Activated CD4-positive, alpha-beta T cell treated with anti-CD3 and anti-CD28 coated beads for 36 hours (primary cell): ENCODE measurements at regions of chr4 and their contacts with region 1.

Region 1: GRCh38 chr4:15956179-15956850 is 6.7 kb downstream of the FGFBP2 start:
- DNase-seq: peak; percentile 92
- ATAC-seq: peak; percentile 93
- H3K4me3 Mint-ChIP-seq: no peak overlapping the region
- H3K27ac Mint-ChIP-seq: no peak overlapping the region
- H3K4me1 Mint-ChIP-seq: peaks cover 5% of the 10 kb centered on the region
- H3K27me3 Mint-ChIP-seq: no peaks in the 10 kb centered on the region

Region 2: GRCh38 chr4:15231265-15232091 is 724.8 kb before region 1 on chr4:
- CTCF ChIA-PET with region 1: no interaction called
- POLR2A ChIA-PET with region 1: no interaction called
- intact Hi-C with region 1: loop called in 1 of 2 experiments (anchors 1 kb)
- DNase-seq: peak; percentile 85
- ATAC-seq: peak; percentile 65
- H3K4me3 Mint-ChIP-seq: no peak overlapping the region
- H3K27ac Mint-ChIP-seq: no peak overlapping the region
- H3K4me1 Mint-ChIP-seq: peaks cover 31% of the 10 kb centered on the region
- H3K27me3 Mint-ChIP-seq: no peaks in the 10 kb centered on the region

Region 3: GRCh38 chr4:15349531-15349935 is 606.8 kb before region 1 on chr4:
- CTCF ChIA-PET with region 1: no interaction called
- POLR2A ChIA-PET with region 1: no interaction called
- intact Hi-C with region 1: no loop called
- DNase-seq: no peak
- ATAC-seq: no peak
- H3K4me3 Mint-ChIP-seq: no peak overlapping the region
- H3K27ac Mint-ChIP-seq: no peak overlapping the region
- H3K4me1 Mint-ChIP-seq: peaks cover 8% of the 10 kb centered on the region
- H3K27me3 Mint-ChIP-seq: no peaks in the 10 kb centered on the region

Region 4: GRCh38 chr4:15479089-15479912 is 477.0 kb before region 1 on chr4:
- CTCF ChIA-PET with region 1: no interaction called
- POLR2A ChIA-PET with region 1: no interaction called
- intact Hi-C with region 1: loop called (anchors 2 kb)
- DNase-seq: peak; percentile 15
- ATAC-seq: peak; percentile 39
- H3K4me3 Mint-ChIP-seq: no peak overlapping the region
- H3K27ac Mint-ChIP-seq: no peak overlapping the region
- H3K4me1 Mint-ChIP-seq: no peaks in the 10 kb centered on the region
- H3K27me3 Mint-ChIP-seq: no peaks in the 10 kb centered on the region

Region 5: GRCh38 chr4:15729910-15730533 is 226.3 kb before region 1 on chr4:
- CTCF ChIA-PET with region 1: interaction called, 7 read pairs
- POLR2A ChIA-PET with region 1: no interaction called
- intact Hi-C with region 1: loop called (anchors 1 kb)
- DNase-seq: peak; percentile 19
- ATAC-seq: peak; percentile 65
- H3K4me3 Mint-ChIP-seq: no peak overlapping the region
- H3K27ac Mint-ChIP-seq: no peak overlapping the region
- H3K4me1 Mint-ChIP-seq: peaks cover 7% of the 10 kb centered on the region
- H3K27me3 Mint-ChIP-seq: no peaks in the 10 kb centered on the region

Region 6: DNA sequence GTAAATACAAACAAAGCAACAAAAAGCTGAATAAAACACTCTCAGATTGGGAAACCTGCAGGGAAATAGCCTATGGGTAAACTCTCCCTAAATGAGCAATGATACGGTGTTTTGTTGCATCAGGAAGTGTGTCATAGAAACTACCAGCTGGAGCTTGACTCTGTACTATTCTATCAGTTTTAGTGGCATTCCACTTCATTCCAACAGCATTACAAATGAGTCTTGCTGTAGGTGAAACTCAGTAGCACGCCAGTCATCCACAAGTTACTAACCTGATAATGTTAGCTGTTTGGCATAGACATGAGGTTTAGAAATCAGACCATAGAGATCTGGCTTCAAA is 42.7 kb before region 1 on chr4:
- CTCF ChIA-PET with region 1: interaction called, 4 read pairs
- POLR2A ChIA-PET with region 1: no interaction called
- intact Hi-C with region 1: loop called in 1 of 2 experiments (anchors 2 kb)
- DNase-seq: no peak
- ATAC-seq: peak; percentile 77
- H3K4me3 Mint-ChIP-seq: no peak overlapping the region
- H3K27ac Mint-ChIP-seq: no peak overlapping the region
- H3K4me1 Mint-ChIP-seq: peaks cover 2% of the 10 kb centered on the region
- H3K27me3 Mint-ChIP-seq: peaks cover 8% of the 10 kb centered on the region

Region 7: GRCh38 chr4:16537926-16538325 is 581.6 kb after region 1 on chr4:
- CTCF ChIA-PET with region 1: no interaction called
- POLR2A ChIA-PET with region 1: no interaction called
- intact Hi-C with region 1: no loop called
- DNase-seq: no peak
- ATAC-seq: no peak
- H3K4me3 Mint-ChIP-seq: no peak overlapping the region
- H3K27ac Mint-ChIP-seq: no peak overlapping the region
- H3K4me1 Mint-ChIP-seq: no peaks in the 10 kb centered on the region
- H3K27me3 Mint-ChIP-seq: peaks cover 2% of the 10 kb centered on the region